Naive thymus-derived CD8-positive, alpha-beta T cell (primary cell): ENCODE measurements at regions of chr1 and their contacts with region 1.

Region 1: DNA sequence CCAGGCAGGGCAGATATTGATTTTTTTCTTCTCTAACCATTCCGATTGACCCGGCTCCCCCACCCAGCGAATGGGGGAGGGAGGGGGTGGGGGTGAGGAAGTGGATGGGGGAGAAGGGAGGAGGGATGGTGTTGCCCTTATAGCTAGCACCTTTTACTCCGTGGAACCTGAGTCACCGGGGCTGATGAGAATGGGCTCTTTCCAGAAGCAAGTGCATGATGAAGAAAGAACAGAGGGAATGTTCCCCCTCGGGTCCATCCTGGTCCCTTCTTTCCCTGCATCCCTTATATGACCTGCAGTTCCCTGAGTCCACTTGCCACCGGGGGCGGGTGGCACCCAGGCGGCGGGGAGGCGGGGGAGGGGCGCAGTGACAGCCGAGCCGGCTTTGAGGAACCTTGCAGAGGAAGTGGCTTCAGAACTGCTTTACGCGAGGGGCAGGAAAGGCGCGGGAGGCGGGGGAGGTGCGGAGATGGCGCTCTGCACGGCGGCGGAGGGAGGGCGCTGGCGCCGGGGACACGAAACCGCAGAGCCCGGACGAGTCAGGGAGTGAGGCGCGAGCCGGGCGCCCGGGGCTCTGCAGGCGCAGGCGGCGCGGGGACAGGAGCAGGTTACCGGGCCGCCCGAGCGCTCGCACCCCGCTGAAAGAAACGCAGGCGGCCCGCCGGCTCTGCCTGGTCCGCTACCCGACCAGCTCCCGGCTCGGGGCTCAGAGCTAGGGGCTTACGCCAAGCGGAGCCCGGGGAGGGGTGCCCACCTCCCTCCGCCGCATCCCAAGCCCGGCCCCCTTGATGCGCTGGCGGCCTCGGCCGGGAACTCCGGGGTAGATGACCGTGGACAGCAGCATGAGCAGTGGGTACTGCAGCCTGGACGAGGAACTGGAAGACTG is 49.7 kb downstream of the RASSF5 start:
- DNase-seq: peak; percentile 74 to 92 (median 88)
- ATAC-seq: peak; percentile 72 to 77
- H3K4me3 Mint-ChIP-seq: peak overlapping the region; percentile 92 to 99 (median 98)
- H3K27ac Mint-ChIP-seq: peak overlapping the region; percentile 74 to 99 (median 94)
- H3K4me1 Mint-ChIP-seq: peaks cover 31 to 78% (median 75%) of the 10 kb centered on the region in 4 donors
- H3K27me3 Mint-ChIP-seq: no peaks in the 10 kb centered on the region

Region 2: GRCh38 chr1:206544562-206545257 is 12.3 kb before region 1 on chr1:
- POLR2A ChIA-PET with region 1: interaction called, 825 read pairs
- DNase-seq: peak; percentile 69 to 90 (median 80)
- ATAC-seq: peak; percentile 91 to 93
- H3K4me3 Mint-ChIP-seq: peak overlapping the region in 2 of 10 donors; percentile 22 to 24
- H3K27ac Mint-ChIP-seq: peak overlapping the region in 5 of 10 donors; percentile 52 to 81 (median 63)
- H3K4me1 Mint-ChIP-seq: peaks cover 5 to 20% (median 17%) of the 10 kb centered on the region in 4 donors
- H3K27me3 Mint-ChIP-seq: no peaks in the 10 kb centered on the region

Region 3: DNA sequence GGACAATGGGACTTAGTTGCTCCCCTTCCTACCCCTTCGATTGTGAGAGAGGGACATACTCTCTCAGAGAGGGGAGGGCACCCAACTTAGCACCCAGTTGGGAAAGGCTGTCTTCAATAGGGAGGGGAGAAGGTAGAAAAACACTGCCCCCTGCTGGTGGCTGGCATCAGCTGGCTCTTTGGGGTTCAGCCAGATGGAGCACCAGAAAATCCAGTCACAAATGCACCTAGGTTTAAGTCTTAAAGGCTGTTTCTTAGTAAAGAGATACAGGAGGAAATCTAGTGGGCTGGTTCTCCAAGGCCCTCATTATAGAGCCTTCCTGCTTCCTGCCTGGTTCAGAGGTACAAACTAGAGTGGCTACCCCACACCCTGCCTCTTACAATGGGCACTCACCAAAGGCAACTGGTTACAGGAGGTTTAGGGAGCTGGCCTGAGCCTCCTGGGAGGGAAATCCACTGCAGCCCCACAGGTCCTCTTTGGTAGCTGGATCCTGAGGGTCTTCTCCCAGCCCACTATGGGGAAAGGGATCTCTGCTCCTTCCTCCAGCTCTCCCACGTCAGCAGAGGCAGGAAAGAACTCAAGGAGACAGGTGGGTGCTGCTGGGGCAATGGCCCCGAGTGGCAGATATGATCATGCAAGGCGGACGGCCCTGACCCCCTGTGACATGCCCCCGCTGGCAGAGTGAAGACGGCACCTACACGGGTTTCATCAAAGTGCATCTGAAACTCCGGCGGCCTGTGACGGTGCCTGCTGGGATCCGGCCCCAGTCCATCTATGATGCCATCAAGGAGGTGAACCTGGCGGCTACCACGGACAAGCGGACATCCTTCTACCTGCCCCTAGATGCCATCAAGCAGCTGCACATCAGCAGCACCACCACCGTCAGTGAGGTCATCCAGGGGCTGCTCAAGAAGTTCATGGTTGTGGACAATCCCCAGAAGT is 27.0 kb after region 1 on chr1:
- POLR2A ChIA-PET with region 1: interaction called, 825 read pairs
- DNase-seq: peak; percentile 66 to 90 (median 82)
- ATAC-seq: peak; percentile 31 to 39
- H3K4me3 Mint-ChIP-seq: peak overlapping the region; percentile 61 to 98 (median 87)
- H3K27ac Mint-ChIP-seq: peak overlapping the region; percentile 89 to 99 (median 96)
- H3K4me1 Mint-ChIP-seq: peaks cover 36 to 79% (median 66%) of the 10 kb centered on the region in 4 donors
- H3K27me3 Mint-ChIP-seq: no peaks in the 10 kb centered on the region

Region 4: DNA sequence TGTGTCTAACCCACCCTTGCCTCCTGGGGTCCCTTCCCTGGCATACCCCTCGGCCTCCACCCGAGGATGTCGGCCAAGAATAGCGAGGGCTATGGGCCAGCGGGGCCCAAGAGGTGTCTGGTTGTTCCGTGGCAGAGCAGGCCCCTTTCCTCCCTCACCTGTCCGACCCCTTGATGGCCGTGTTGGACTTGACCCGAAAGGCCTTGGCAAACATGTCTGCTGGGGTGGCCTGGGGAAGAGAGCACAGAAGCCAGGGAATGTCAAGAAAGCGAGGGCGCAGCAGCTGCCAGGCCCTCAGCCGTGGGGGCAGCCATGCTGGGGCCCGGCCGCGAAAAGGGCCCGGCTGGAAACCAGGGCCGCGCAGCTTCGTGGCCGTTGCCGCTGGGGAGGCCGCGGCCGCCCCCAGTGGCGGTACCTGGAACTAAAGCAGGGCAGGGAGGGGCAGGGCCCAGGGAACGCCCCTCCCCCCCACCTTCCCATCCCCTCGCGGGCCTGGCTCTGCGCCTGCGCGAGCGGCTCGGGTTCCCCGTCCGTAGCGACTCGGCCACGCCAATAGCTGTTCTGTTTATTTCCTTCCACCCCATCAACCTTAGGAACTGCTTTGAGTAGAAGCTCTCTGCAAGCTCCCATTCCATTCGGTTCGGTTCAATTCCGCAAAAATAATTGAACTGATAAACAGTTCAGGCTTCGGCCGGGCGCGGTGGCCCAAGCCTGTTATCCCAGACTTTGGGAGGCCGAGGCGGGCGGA is 55.3 kb after region 1 on chr1 and contains the start of gene EIF2D:
- POLR2A ChIA-PET with region 1: interaction called, 17 read pairs
- DNase-seq: peak; percentile 87 to 97 (median 94)
- ATAC-seq: peak; percentile 98
- H3K4me3 Mint-ChIP-seq: peak within 1 kb of the TSS; percentile 87 to 97 (median 93)
- H3K27ac Mint-ChIP-seq: peak within 1 kb of the TSS; percentile 93 to 99 (median 96)
- H3K4me1 Mint-ChIP-seq: peaks cover 12 to 24% (median 20%) of the 10 kb centered on the region in 4 donors
- H3K27me3 Mint-ChIP-seq: peaks cover 0 to 2% (median 0%) of the 10 kb centered on the region in 5 donors
- polyA plus RNA-seq, gene EIF2D: 38.9 to 46.0 (median 39.1) TPM

Region 5: DNA sequence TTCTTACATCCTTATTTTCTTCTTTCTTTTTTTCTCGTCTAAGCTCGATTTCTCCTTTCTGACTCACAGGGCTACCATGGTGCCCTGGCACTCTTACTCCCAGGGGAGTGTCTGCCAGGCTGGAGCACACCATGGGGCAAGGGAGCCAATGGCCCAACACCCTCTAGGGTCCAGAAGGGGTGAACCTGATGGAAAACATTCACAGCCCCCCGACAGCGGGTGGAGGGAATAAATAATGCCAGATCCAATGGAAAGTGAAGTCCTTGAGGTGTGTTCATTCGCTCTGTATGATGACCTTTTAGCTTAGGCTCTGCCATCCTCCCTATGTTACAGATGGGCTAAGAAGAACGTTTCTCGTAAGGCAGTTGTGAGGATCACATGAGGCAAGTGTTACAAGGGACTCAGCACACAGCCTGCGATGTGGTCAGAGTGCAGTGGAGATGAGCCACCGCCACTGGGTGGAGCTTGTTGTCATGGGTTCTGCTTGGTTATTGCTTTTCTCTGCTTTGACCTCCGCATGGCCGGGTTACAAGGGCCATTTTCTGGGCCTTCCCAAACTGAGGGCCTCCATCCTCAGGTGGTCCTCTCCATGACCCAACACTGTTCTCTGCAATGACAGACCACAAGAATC is 368.2 kb after region 1 on chr1:
- POLR2A ChIA-PET with region 1: interaction called, 12 read pairs
- DNase-seq: peak in 9 of 10 donors; percentile 47 to 81 (median 66)
- ATAC-seq: peak; percentile 48 to 52
- H3K4me3 Mint-ChIP-seq: no peak overlapping the region
- H3K27ac Mint-ChIP-seq: no peak overlapping the region
- H3K4me1 Mint-ChIP-seq: peaks cover 18 to 40% (median 28%) of the 10 kb centered on the region in 4 donors
- H3K27me3 Mint-ChIP-seq: no peaks in the 10 kb centered on the region